ENCODE measurements at regions of chr19 and their contacts with region 1.

Region 1: DNA sequence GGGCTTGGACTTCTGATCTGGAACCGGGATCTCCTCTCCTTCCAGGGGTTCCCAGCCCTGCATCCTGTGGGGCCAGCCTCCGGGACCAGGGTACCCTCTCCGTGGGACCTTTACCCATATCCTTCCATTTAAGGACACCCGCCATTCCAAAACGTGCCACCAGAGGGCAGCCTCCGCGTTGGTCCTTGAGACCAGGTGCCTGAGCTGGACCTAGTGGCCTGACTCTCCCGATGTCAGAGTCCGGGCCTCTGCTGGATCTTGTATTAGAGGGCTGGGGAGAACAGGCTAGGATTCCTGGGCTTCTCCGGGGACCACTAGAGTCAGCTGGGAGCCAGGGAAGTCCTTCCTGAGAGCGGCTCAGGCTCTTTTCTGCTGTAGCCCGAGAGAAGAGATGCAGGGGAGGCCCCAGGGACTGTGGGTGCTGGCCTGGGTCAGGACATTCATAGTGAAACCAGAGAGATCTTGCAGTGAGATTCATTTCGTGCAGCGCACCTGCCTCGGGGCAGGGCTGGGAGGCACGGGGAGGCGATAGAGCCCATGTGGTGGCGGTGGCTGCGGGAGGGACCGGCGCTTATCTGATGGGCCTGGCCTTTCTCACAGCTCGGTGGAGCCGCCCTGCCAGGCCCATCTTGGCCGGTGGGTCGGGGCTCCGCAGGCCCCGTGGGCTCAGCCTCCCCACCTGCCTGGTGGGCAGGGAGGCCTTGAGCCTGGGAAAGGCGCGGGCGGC is 9.8 kb upstream of the SLC7A10 start:
- DNase-seq: peak; percentile 64 to 85 (median 80)
- H3K4me3 ChIP-seq: no peak overlapping the region
- H3K27ac ChIP-seq: no peak overlapping the region
- H3K4me1 ChIP-seq: peaks cover 0 to 2% (median 0%) of the 10 kb centered on the region in 3 donors
- H3K27me3 ChIP-seq: no peaks in the 10 kb centered on the region
- CTCF ChIP-seq: peak; percentile 78

Region 2: GRCh38 chr19:32976208-32976805 is 259.1 kb before region 1 on chr19:
- intact Hi-C with region 1: no loop called
- DNase-seq: peak in 4 of 5 donors; percentile 66 to 75 (median 74)
- H3K4me3 ChIP-seq: no peak overlapping the region
- H3K27ac ChIP-seq: no peak overlapping the region
- H3K4me1 ChIP-seq: peaks cover 0 to 3% (median 0%) of the 10 kb centered on the region in 3 donors
- H3K27me3 ChIP-seq: no peaks in the 10 kb centered on the region
- CTCF ChIP-seq: peak; percentile 76

Region 3: DNA sequence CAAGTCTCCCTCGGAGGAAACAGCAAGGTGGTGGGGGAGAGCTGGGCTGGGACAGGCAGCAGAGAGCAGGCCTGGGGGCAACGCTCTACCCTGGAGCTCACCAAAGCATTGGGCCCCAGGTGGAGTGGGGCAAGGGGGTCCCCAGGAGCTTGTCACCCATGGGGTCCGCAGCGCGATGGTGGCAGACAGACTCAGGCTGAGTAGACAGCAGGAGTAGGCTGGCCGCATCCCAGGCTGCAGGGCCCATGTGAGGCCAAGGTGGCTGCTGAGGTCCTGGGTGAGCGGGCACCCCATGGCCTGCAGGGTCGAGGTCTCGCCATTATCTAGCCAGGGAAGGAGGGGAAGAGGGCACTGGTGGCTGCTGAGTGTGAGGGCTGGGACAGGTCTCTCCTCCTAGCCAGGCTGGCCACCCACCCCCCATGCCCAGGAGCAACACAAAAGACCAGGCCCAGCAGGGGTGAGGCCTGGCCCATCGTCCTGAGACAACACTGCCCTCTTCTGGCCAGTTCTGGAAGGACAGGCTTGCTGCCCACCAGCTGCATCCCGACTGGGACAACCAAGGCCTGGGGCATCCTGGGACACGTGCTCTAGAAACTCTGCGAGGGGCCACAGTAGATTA is 171.2 kb after region 1 on chr19:
- intact Hi-C with region 1: loop called (anchors 5 kb)
- DNase-seq: peak; percentile 49 to 88 (median 81)
- H3K4me3 ChIP-seq: no peak overlapping the region
- H3K27ac ChIP-seq: no peak overlapping the region
- H3K4me1 ChIP-seq: peaks cover 0 to 3% (median 3%) of the 10 kb centered on the region in 3 donors
- H3K27me3 ChIP-seq: no peaks in the 10 kb centered on the region
- CTCF ChIP-seq: peak; percentile 97